SK-N-SH (cell line): ENCODE measurements at regions of chr11 and their contacts with region 1.

Region 1: GRCh38 chr11:36376888-36377758 is 81.0 kb downstream of the PRR5L start:
- DNase-seq: peak; percentile 79
- H3K4me3 ChIP-seq: peak overlapping the region; percentile 50 to 70
- H3K27ac ChIP-seq: no peak overlapping the region
- H3K4me1 ChIP-seq: peaks cover 14 to 26% of the 10 kb centered on the region in 2 experiments; a peak in 2 of 4 replicates
- H3K27me3 ChIP-seq: peaks cover 37% of the 10 kb centered on the region; the same call in 1 of the 2 replicates
- CTCF ChIP-seq: peak; percentile 69
- EP300 ChIP-seq: no peak
- RAD21 ChIP-seq: no peak

Region 2: DNA sequence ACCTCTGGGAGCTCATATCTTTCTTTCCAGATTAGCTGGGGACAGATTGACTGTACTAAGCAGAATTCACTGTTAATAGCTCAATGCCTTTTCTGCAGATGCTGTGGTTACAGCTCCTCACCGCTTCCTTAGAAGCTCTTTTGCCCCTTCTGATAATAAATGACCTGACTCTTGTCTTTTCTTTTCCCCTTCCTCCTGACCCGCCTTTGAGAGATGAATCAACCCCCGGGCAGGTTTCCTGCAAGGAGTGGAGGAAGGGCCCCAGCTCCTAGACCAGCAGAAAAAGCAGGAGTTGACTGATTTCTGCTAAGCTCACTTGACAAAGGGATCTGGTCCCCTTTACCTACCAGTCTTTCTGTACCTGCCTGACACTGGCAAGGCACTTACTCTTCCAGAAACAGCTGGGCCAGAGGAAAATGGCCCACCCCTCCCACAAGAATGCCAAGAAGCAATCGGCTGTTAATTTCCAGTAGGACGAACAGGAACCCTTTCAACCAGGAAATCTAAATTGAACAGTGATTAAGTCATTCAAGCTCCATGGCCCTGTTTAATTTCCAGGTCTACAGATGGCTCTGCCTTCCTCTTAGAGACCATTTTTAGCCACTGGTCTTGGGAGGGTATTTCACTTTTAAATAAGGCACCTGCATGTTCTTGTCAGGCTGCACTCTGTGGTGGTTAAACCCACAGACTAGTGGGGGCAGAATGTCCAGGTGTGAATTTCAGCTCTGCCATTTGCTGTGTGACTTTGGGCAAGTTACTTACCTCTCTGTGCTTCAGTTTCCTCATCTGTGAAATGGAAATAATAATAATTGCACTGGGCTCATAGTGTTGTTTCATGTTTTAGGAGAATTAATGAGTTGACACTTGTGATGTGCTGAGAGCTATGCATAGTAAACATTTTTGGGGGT is 13.5 kb before region 1 on chr11:
- CTCF ChIA-PET with region 1: interaction called, 10 read pairs
- POLR2A ChIA-PET with region 1: no interaction called
- DNase-seq: no peak
- H3K4me3 ChIP-seq: no peak overlapping the region
- H3K27ac ChIP-seq: no peak overlapping the region
- H3K4me1 ChIP-seq: peaks cover 0 to 19% of the 10 kb centered on the region in 2 experiments; a peak in 1 of 4 replicates
- H3K27me3 ChIP-seq: no peaks in the 10 kb centered on the region
- CTCF ChIP-seq: no peak
- EP300 ChIP-seq: no peak
- RAD21 ChIP-seq: no peak